OCI-LY7 (cell line): ENCODE measurements at regions of chrX and their contacts with region 1.

Region 1: GRCh38 chrX:5646818-5647217 is 581.8 kb downstream of the NLGN4X start:
- DNase-seq: peak; percentile 82
- H3K4me3 ChIP-seq: peak overlapping the region; percentile 40
- H3K27ac ChIP-seq: peak overlapping the region; percentile 64
- H3K4me1 ChIP-seq: peaks cover 64% of the 10 kb centered on the region
- CTCF ChIP-seq: no peak

Region 2: GRCh38 chrX:5388087-5388486 is 258.7 kb before region 1 on chrX:
- CTCF ChIA-PET with region 1: no interaction called
- POLR2A ChIA-PET with region 1: no interaction called
- intact Hi-C with region 1: loop called (anchors 5 kb)
- DNase-seq: peak; percentile 84
- H3K4me3 ChIP-seq: peak overlapping the region; percentile 1
- H3K27ac ChIP-seq: peak overlapping the region; percentile 76
- H3K4me1 ChIP-seq: peaks cover 20% of the 10 kb centered on the region
- CTCF ChIP-seq: no peak

Region 3: GRCh38 chrX:5681159-5681558 is 34.3 kb after region 1 on chrX:
- CTCF ChIA-PET with region 1: no interaction called
- POLR2A ChIA-PET with region 1: no interaction called
- intact Hi-C with region 1: no loop called
- DNase-seq: peak; percentile 11
- H3K4me3 ChIP-seq: no peak overlapping the region
- H3K27ac ChIP-seq: no peak overlapping the region
- H3K4me1 ChIP-seq: no peaks in the 10 kb centered on the region
- CTCF ChIP-seq: peak; percentile 50